ENCODE measurements at regions of chr15 and their contacts with region 1.

Region 1: DNA sequence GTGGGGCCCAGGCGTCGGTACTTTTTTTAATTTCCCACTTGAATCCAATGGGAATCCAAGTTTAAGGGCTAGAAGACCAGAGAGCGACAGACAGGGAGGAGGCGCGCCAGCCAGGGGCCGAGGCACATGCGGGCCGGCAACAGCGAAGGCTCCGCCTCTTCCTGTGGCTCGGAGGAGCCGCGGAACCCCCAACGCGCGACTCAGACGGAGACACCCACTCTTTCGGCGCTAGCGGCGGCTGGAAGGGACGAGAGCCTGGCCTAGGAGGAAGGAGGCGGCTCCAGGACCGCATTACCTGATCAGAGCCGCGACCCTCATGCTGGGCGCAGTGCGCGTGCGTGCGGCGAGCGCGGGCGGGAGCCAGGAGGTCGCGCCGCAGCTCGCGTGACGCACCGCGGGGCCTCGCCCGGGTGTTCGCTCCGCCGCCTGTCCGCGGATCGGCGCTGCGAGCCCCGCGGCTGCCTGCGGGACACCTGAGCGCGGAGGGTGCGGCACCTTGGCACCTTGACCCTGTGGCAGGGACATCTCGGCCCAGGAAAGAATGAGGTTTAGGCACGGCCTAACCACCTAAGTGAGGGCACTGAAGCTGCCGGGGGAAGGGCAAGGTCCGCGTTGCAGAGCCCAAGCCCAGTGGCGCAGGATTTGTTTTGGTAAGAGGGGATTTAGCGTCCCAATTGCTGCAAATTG is at the start of gene DPH6:
- DNase-seq: peak; percentile 94
- H3K4me3 Mint-ChIP-seq: peak within 1 kb of the TSS; percentile 97
- H3K27ac Mint-ChIP-seq: peak within 1 kb of the TSS; percentile 99
- H3K4me1 Mint-ChIP-seq: peaks cover 13% of the 10 kb centered on the region
- H3K27me3 Mint-ChIP-seq: no peaks in the 10 kb centered on the region
- total RNA-seq, gene DPH6: 13.2 and 15.2 TPM in 2 replicates

Region 2: GRCh38 chr15:34987985-34988873 is 557.7 kb before region 1 on chr15 and contains the start of gene ZNF770:
- intact Hi-C with region 1: loop called (anchors 5 kb)
- DNase-seq: peak; percentile 96
- H3K4me3 Mint-ChIP-seq: peak within 1 kb of the TSS; percentile 97
- H3K27ac Mint-ChIP-seq: peak within 1 kb of the TSS; percentile 99
- H3K4me1 Mint-ChIP-seq: peaks cover 28% of the 10 kb centered on the region
- H3K27me3 Mint-ChIP-seq: no peaks in the 10 kb centered on the region
- total RNA-seq, gene ZNF770: 53.9 and 56.3 TPM in 2 replicates

Region 3: DNA sequence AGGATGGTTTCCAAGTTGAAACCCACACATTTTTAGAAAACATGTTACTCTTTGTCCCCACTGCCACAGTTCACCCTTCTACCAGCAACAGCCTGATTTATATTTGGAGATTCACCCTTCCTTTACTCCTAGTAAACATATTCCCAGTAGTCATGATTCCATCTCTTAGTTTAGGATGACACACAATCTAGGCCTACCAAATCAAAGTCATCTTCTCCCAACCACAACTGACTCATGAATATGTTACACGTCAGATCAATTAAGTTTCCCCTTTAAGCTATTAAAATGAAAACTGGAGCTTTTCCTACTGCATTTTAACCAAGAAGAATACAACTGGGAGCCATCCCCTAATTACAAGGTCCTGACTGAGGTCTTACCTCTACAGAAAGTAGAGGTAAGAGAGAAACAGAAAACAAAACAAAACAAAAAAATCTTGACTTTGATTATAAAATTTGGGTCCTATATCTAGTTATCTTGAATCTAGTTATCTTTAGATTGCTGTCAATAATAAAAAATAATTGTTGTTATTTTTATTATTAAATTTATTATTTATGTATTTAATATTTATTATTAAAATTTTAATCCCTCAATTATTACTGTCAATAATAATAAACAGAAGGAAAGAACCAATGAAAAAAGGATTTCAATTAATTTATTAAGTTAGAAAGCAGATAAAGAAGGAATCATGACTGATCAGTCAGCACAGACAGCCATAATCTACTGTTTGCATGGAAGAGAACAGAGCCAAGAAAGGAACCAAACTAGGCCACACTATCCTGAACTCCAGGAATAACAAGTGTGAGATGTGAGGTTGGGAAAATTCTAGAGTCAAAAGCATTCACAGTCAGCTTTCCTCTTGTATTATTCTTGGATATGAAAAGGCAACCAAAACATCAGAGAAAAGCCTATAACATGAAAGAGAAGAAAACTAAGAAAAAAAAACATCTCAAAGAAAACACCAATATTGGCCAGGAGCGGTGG is 12.5 kb before region 1 on chr15:
- intact Hi-C with region 1: no loop called
- DNase-seq: no peak
- H3K4me3 Mint-ChIP-seq: no peak overlapping the region
- H3K27ac Mint-ChIP-seq: no peak overlapping the region
- H3K4me1 Mint-ChIP-seq: no peaks in the 10 kb centered on the region
- H3K27me3 Mint-ChIP-seq: no peaks in the 10 kb centered on the region

Region 4: DNA sequence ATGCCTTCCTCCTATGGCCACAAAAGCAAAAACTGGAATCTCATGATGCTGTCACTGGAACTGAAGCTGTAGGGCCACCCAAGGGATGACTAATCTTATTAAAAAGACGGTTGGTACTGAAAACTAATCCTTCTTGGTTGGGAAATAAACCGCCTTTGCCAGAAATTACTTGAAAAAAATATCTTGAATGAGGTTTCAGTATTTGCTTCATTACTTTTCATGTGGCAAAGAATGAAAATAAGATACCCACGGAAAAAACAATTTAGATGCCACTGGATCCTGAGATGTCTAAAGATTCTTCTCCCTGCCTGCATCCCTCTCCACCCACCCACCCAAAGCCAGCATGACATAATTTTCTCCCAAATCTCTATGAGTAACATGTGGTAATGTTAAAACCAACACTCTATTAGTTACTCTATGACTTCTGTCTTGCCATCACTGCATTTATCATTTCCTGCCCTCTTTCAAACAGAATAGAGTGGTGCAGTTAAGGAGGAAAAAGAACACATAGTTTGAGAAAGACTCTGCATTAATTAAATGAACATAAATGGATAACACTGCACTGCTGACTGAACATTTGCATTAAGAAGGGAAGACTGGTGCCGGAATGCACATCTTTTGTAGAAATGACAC is 111.8 kb after region 1 on chr15:
- intact Hi-C with region 1: loop called (anchors 5 kb)
- DNase-seq: no peak
- H3K4me3 Mint-ChIP-seq: no peak overlapping the region
- H3K27ac Mint-ChIP-seq: peak overlapping the region; percentile 52
- H3K4me1 Mint-ChIP-seq: peaks cover 5% of the 10 kb centered on the region
- H3K27me3 Mint-ChIP-seq: peaks cover 11% of the 10 kb centered on the region

Measured in activated CD4-positive, alpha-beta T cell treated with anti-CD3 and anti-CD28 coated beads, Interleukin-2, amount 10 ng/mL, durations not matched to agents 24 days and 14 days (primary cell).